CD8-positive, alpha-beta T cell (primary cell): ENCODE measurements at regions of chr2 and their contacts with region 1.

Region 1: GRCh38 chr2:69643602-69644505 is at the start of gene AAK1:
- DNase-seq: peak; percentile 60 to 92 (median 83)
- ATAC-seq: peak; percentile 41
- H3K4me3 ChIP-seq: peak within 1 kb of the TSS; percentile 83 to 95
- H3K4me3 Mint-ChIP-seq: peak within 1 kb of the TSS; percentile 96
- H3K27ac ChIP-seq: peak within 1 kb of the TSS; percentile 58 to 86
- H3K27ac Mint-ChIP-seq: peak within 1 kb of the TSS; percentile 97
- H3K4me1 ChIP-seq: peaks cover 54% of the 10 kb centered on the region
- H3K4me1 Mint-ChIP-seq: peaks cover 65% of the 10 kb centered on the region
- H3K27me3 ChIP-seq: no peaks in the 10 kb centered on the region
- H3K27me3 Mint-ChIP-seq: no peaks in the 10 kb centered on the region
- CTCF ChIP-seq: no peak
- total RNA-seq, gene AAK1: 156 to 174 TPM

Region 2: DNA sequence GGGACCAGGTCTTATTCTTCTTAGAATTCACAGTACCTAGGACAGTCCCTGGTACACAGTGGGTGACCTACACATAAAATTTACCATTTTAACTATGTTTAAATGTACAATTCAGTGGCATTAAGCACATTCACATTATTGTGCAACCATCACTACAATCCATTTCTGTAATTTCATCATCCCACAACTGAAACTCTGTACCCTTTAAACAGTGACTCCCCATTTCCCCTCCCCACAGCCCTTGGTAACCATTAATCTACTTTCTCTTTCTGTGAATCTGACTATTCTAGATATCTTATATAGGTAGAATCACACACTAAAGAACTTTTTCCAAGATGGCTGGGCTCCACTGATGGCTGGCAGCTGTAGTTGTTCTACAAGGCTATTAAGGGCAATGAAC is 298.4 kb before region 1 on chr2:
- CTCF ChIA-PET with region 1: no interaction called
- POLR2A ChIA-PET with region 1: no interaction called
- intact Hi-C with region 1: no loop called
- DNase-seq: no peak
- ATAC-seq: no peak
- H3K4me3 ChIP-seq: no peak overlapping the region
- H3K4me3 Mint-ChIP-seq: no peak overlapping the region
- H3K27ac ChIP-seq: no peak overlapping the region
- H3K27ac Mint-ChIP-seq: no peak overlapping the region
- H3K4me1 ChIP-seq: no peaks in the 10 kb centered on the region
- H3K4me1 Mint-ChIP-seq: no peaks in the 10 kb centered on the region
- H3K27me3 ChIP-seq: no peaks in the 10 kb centered on the region
- H3K27me3 Mint-ChIP-seq: no peaks in the 10 kb centered on the region
- CTCF ChIP-seq: no peak

Region 3: DNA sequence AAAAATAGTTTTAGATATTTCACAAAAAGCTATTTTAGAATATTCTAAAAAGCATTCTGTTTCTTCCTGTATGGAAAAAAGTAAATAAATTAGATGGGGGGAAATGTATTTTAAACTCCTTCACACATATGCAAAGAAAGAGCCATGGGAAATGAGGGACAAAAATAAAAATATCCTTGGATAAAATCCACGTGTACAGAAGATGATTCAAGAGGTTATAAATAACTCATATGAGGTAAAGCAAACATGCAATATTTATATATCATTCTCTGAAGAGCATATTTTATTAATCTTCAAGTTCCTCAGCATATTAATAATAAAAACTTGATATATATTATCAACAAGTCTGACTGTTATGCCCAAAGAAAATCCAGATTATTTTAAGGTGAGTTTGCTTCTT is 248.0 kb before region 1 on chr2:
- CTCF ChIA-PET with region 1: no interaction called
- POLR2A ChIA-PET with region 1: no interaction called
- intact Hi-C with region 1: no loop called
- DNase-seq: no peak
- ATAC-seq: no peak
- H3K4me3 ChIP-seq: no peak overlapping the region
- H3K4me3 Mint-ChIP-seq: no peak overlapping the region
- H3K27ac ChIP-seq: no peak overlapping the region
- H3K27ac Mint-ChIP-seq: no peak overlapping the region
- H3K4me1 ChIP-seq: no peaks in the 10 kb centered on the region
- H3K4me1 Mint-ChIP-seq: no peaks in the 10 kb centered on the region
- H3K27me3 ChIP-seq: no peaks in the 10 kb centered on the region
- H3K27me3 Mint-ChIP-seq: no peaks in the 10 kb centered on the region
- CTCF ChIP-seq: no peak

Region 4: DNA sequence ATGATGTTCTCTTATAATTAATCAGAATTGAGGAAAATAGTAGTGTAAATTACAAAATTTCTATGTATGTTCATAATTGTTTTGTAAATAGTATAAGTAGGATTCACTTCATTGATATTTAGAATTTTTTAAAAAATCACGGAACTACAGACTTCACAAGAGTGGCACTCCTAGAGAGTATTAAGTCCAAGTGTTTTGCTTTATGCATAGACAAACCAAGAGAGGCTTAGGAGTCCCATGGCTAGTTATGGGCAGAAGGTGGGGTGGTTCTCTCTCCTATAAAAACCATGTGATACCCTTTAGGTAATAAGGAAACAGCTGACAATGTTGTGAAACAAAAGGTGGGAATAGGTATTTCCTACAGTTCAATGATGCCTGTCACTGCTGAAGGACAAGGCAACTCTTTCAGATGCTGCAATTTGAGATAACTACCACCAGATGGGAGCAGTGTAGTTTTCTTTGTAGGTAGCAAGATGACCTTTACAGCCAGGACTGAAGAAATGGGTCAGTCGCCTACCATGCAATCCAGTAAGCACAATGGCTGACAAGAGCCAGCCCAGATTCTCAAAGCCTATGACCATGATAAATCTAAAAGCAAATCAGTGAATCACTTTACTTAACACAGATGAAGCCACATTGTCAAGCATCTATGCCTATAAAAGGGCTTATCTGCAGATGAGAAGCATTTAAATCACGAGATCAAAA is 84.3 kb before region 1 on chr2:
- CTCF ChIA-PET with region 1: interaction called, 51 read pairs
- POLR2A ChIA-PET with region 1: interaction called, 21 read pairs
- intact Hi-C with region 1: loop called (anchors 2 kb)
- DNase-seq: peak in 2 of 9 experiments; percentile 51 to 63
- ATAC-seq: peak; percentile 70
- H3K4me3 ChIP-seq: no peak overlapping the region
- H3K4me3 Mint-ChIP-seq: no peak overlapping the region
- H3K27ac ChIP-seq: no peak overlapping the region
- H3K27ac Mint-ChIP-seq: peak overlapping the region; percentile 83
- H3K4me1 ChIP-seq: peaks cover 81% of the 10 kb centered on the region
- H3K4me1 Mint-ChIP-seq: peaks cover 86% of the 10 kb centered on the region
- H3K27me3 ChIP-seq: no peaks in the 10 kb centered on the region
- H3K27me3 Mint-ChIP-seq: no peaks in the 10 kb centered on the region
- CTCF ChIP-seq: peak; percentile 68

Region 5: GRCh38 chr2:69601179-69601612 is 42.7 kb before region 1 on chr2:
- CTCF ChIA-PET with region 1: interaction called, 4 read pairs
- POLR2A ChIA-PET with region 1: interaction called, 8 read pairs
- intact Hi-C with region 1: loop called in 1 of 2 experiments (anchors 5 kb)
- DNase-seq: no peak
- ATAC-seq: peak; percentile 61
- H3K4me3 ChIP-seq: no peak overlapping the region
- H3K4me3 Mint-ChIP-seq: no peak overlapping the region
- H3K27ac ChIP-seq: no peak overlapping the region
- H3K27ac Mint-ChIP-seq: peak overlapping the region; percentile 55
- H3K4me1 ChIP-seq: peaks cover 85% of the 10 kb centered on the region
- H3K4me1 Mint-ChIP-seq: peaks cover 90% of the 10 kb centered on the region
- H3K27me3 ChIP-seq: no peaks in the 10 kb centered on the region
- H3K27me3 Mint-ChIP-seq: no peaks in the 10 kb centered on the region
- CTCF ChIP-seq: no peak

Region 6: GRCh38 chr2:69683101-69683971 is 39.5 kb after region 1 on chr2:
- CTCF ChIA-PET with region 1: interaction called, 3 read pairs
- POLR2A ChIA-PET with region 1: interaction called, 21 read pairs
- intact Hi-C with region 1: no loop called
- DNase-seq: peak in 1 of 9 experiments; percentile 20
- ATAC-seq: no peak
- H3K4me3 ChIP-seq: no peak overlapping the region
- H3K4me3 Mint-ChIP-seq: peak overlapping the region; percentile 32
- H3K27ac ChIP-seq: no peak overlapping the region
- H3K27ac Mint-ChIP-seq: peak overlapping the region; percentile 86
- H3K4me1 ChIP-seq: peaks cover 26% of the 10 kb centered on the region
- H3K4me1 Mint-ChIP-seq: peaks cover 58% of the 10 kb centered on the region
- H3K27me3 ChIP-seq: no peaks in the 10 kb centered on the region
- H3K27me3 Mint-ChIP-seq: no peaks in the 10 kb centered on the region
- CTCF ChIP-seq: no peak

Region 7: DNA sequence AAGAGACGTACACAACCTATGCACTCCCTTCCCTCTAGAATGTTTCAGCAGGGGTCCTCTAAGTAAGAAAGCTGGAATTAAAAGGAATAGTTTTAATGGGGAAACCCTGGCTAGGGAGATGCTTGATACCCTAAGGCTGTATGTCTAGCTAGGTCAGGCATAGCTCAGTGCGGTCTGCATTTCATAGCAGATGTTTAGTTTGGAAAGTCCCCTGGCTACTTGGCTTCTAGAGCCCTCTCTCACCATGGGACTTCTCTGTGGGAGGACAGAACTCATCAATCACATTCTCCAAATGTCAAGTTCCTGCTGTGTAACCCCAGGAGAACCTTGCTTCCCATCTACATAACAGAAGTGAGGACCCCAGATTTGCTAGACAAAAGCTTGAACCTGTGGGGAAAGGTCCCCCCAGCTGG is 74.0 kb after region 1 on chr2:
- CTCF ChIA-PET with region 1: interaction called, 54 read pairs
- POLR2A ChIA-PET with region 1: interaction called, 24 read pairs
- intact Hi-C with region 1: loop called (anchors 1 to 2 kb)
- DNase-seq: no peak
- ATAC-seq: no peak
- H3K4me3 ChIP-seq: no peak overlapping the region
- H3K4me3 Mint-ChIP-seq: no peak overlapping the region
- H3K27ac ChIP-seq: no peak overlapping the region
- H3K27ac Mint-ChIP-seq: no peak overlapping the region
- H3K4me1 ChIP-seq: peaks cover 11% of the 10 kb centered on the region
- H3K4me1 Mint-ChIP-seq: peaks cover 18% of the 10 kb centered on the region
- H3K27me3 ChIP-seq: no peaks in the 10 kb centered on the region
- H3K27me3 Mint-ChIP-seq: no peaks in the 10 kb centered on the region
- CTCF ChIP-seq: no peak

Region 8: GRCh38 chr2:69893684-69894551 is 250.1 kb after region 1 on chr2 and contains the start of gene SNRNP27:
- CTCF ChIA-PET with region 1: no interaction called
- POLR2A ChIA-PET with region 1: interaction called, 4 read pairs
- intact Hi-C with region 1: loop called in 1 of 2 experiments (anchors 10 kb)
- DNase-seq: peak; percentile 71 to 89 (median 83)
- ATAC-seq: peak; percentile 92
- H3K4me3 ChIP-seq: peak within 1 kb of the TSS; percentile 85 to 88
- H3K4me3 Mint-ChIP-seq: peak within 1 kb of the TSS; percentile 99
- H3K27ac ChIP-seq: peak within 1 kb of the TSS; percentile 82 to 86
- H3K27ac Mint-ChIP-seq: peak within 1 kb of the TSS; percentile 99
- H3K4me1 ChIP-seq: peaks cover 13% of the 10 kb centered on the region
- H3K4me1 Mint-ChIP-seq: peaks cover 46% of the 10 kb centered on the region
- H3K27me3 ChIP-seq: no peaks in the 10 kb centered on the region
- H3K27me3 Mint-ChIP-seq: no peaks in the 10 kb centered on the region
- CTCF ChIP-seq: no peak
- total RNA-seq, gene SNRNP27: 47.9 to 58.5 TPM

Region 9: GRCh38 chr2:70049255-70049654 is 405.4 kb after region 1 on chr2:
- CTCF ChIA-PET with region 1: no interaction called
- POLR2A ChIA-PET with region 1: no interaction called
- intact Hi-C with region 1: no loop called
- DNase-seq: no peak
- ATAC-seq: no peak
- H3K4me3 ChIP-seq: no peak overlapping the region
- H3K4me3 Mint-ChIP-seq: no peak overlapping the region
- H3K27ac ChIP-seq: no peak overlapping the region
- H3K27ac Mint-ChIP-seq: peak overlapping the region; percentile 57
- H3K4me1 ChIP-seq: no peaks in the 10 kb centered on the region
- H3K4me1 Mint-ChIP-seq: peaks cover 8% of the 10 kb centered on the region
- H3K27me3 ChIP-seq: no peaks in the 10 kb centered on the region
- H3K27me3 Mint-ChIP-seq: no peaks in the 10 kb centered on the region
- CTCF ChIP-seq: no peak